ENCODE measurements at regions of chr9 and their contacts with region 1.

Region 1: DNA sequence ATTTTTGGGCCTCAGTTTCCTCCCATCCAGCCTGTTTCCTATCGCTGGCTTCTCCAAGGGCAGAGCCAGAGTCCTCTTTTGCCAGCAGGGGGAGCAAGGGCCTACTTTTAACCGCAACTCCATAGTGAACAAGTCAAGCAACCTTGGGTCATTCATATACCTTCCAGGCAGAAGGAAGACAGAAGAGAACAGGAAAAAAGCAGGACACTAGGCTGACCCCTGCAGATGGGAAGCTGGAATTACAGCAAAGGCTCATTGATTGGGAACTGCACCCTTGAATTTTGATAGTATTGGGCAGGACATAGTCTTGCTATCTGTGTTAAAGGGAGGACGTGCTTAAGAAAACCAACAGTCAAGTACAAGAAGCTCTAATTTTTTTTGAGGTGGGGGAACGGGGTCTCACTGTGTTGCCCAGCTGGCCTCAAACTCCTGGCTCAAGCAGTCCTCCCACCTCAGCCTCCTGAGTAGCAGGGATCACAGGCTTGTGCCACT is 30.1 kb downstream of the QRFP start:
- DNase-seq: peak; percentile 22 to 71 (median 42)
- ATAC-seq: peak; percentile 52
- H3K4me3 ChIP-seq: no peak overlapping the region
- H3K4me3 Mint-ChIP-seq: no peak overlapping the region
- H3K27ac ChIP-seq: no peak overlapping the region
- H3K27ac Mint-ChIP-seq: no peak overlapping the region
- H3K4me1 ChIP-seq: no peaks in the 10 kb centered on the region
- H3K4me1 Mint-ChIP-seq: peaks cover 5% of the 10 kb centered on the region
- H3K27me3 ChIP-seq: no peaks in the 10 kb centered on the region
- H3K27me3 Mint-ChIP-seq: no peaks in the 10 kb centered on the region
- CTCF ChIP-seq: peak; percentile 79

Region 2: DNA sequence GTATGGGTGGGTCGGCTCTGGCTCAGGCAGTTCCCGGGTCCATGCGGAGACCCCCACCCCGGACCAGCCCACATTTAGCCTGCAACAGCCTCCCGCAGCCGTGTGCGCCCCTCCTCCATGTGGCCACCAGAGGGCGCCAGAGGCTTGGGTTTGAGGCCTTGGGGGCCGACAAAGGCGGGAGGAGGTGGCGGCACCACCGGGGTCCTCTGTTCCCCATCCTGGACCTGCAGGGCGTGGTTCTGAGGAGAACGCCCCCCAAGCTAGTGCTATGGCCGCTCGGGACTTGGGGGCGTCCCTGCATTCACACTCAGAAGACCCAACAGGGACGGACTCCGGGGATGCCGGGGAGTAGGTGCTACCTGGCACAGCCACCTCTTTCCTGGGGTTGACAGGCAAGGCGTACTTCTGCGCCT is 405.3 kb before region 1 on chr9:
- CTCF ChIA-PET with region 1: no interaction called
- POLR2A ChIA-PET with region 1: no interaction called
- intact Hi-C with region 1: loop called in 1 of 2 experiments (anchors 2 kb)
- DNase-seq: peak; percentile 52 to 82 (median 66)
- ATAC-seq: peak; percentile 55
- H3K4me3 ChIP-seq: no peak overlapping the region
- H3K4me3 Mint-ChIP-seq: no peak overlapping the region
- H3K27ac ChIP-seq: no peak overlapping the region
- H3K27ac Mint-ChIP-seq: no peak overlapping the region
- H3K4me1 ChIP-seq: peaks cover 4% of the 10 kb centered on the region
- H3K4me1 Mint-ChIP-seq: no peaks in the 10 kb centered on the region
- H3K27me3 ChIP-seq: peaks cover 22 to 25% of the 10 kb centered on the region in 2 experiments
- H3K27me3 Mint-ChIP-seq: peaks cover 33% of the 10 kb centered on the region
- CTCF ChIP-seq: peak; percentile 90

Region 3: GRCh38 chr9:130522233-130522808 is 344.2 kb before region 1 on chr9:
- CTCF ChIA-PET with region 1: no interaction called
- POLR2A ChIA-PET with region 1: no interaction called
- intact Hi-C with region 1: no loop called
- DNase-seq: no peak
- ATAC-seq: no peak
- H3K4me3 ChIP-seq: no peak overlapping the region
- H3K4me3 Mint-ChIP-seq: no peak overlapping the region
- H3K27ac ChIP-seq: no peak overlapping the region
- H3K27ac Mint-ChIP-seq: no peak overlapping the region
- H3K4me1 ChIP-seq: no peaks in the 10 kb centered on the region
- H3K4me1 Mint-ChIP-seq: no peaks in the 10 kb centered on the region
- H3K27me3 ChIP-seq: peaks cover 0 to 2% of the 10 kb centered on the region in 2 experiments
- H3K27me3 Mint-ChIP-seq: peaks cover 22% of the 10 kb centered on the region
- CTCF ChIP-seq: no peak

Region 4: GRCh38 chr9:130707225-130707976 is 159.1 kb before region 1 on chr9:
- CTCF ChIA-PET with region 1: interaction called, 4 read pairs
- POLR2A ChIA-PET with region 1: no interaction called
- intact Hi-C with region 1: loop called (anchors 1 to 2 kb)
- DNase-seq: peak; percentile 49 to 88 (median 68)
- ATAC-seq: peak; percentile 63
- H3K4me3 ChIP-seq: no peak overlapping the region
- H3K4me3 Mint-ChIP-seq: no peak overlapping the region
- H3K27ac ChIP-seq: no peak overlapping the region
- H3K27ac Mint-ChIP-seq: peak overlapping the region; percentile 2
- H3K4me1 ChIP-seq: peaks cover 5% of the 10 kb centered on the region
- H3K4me1 Mint-ChIP-seq: peaks cover 12% of the 10 kb centered on the region
- H3K27me3 ChIP-seq: no peaks in the 10 kb centered on the region
- H3K27me3 Mint-ChIP-seq: no peaks in the 10 kb centered on the region
- CTCF ChIP-seq: peak; percentile 87

Region 5: GRCh38 chr9:130770679-130771442 is 95.7 kb before region 1 on chr9:
- CTCF ChIA-PET with region 1: interaction called, 3 read pairs
- POLR2A ChIA-PET with region 1: no interaction called
- intact Hi-C with region 1: loop called in 1 of 2 experiments (anchors 2 kb)
- DNase-seq: peak in 3 of 14 experiments; percentile 27 to 54 (median 50)
- ATAC-seq: peak; percentile 64
- H3K4me3 ChIP-seq: no peak overlapping the region
- H3K4me3 Mint-ChIP-seq: no peak overlapping the region
- H3K27ac ChIP-seq: no peak overlapping the region
- H3K27ac Mint-ChIP-seq: no peak overlapping the region
- H3K4me1 ChIP-seq: peaks cover 8% of the 10 kb centered on the region
- H3K4me1 Mint-ChIP-seq: peaks cover 43% of the 10 kb centered on the region
- H3K27me3 ChIP-seq: no peaks in the 10 kb centered on the region
- H3K27me3 Mint-ChIP-seq: no peaks in the 10 kb centered on the region
- CTCF ChIP-seq: peak; percentile 62

Region 6: GRCh38 chr9:130830231-130830760 is 36.2 kb before region 1 on chr9:
- CTCF ChIA-PET with region 1: no interaction called
- POLR2A ChIA-PET with region 1: no interaction called
- intact Hi-C with region 1: no loop called
- DNase-seq: no peak
- ATAC-seq: no peak
- H3K4me3 ChIP-seq: no peak overlapping the region
- H3K4me3 Mint-ChIP-seq: no peak overlapping the region
- H3K27ac ChIP-seq: no peak overlapping the region
- H3K27ac Mint-ChIP-seq: no peak overlapping the region
- H3K4me1 ChIP-seq: peaks cover 17% of the 10 kb centered on the region
- H3K4me1 Mint-ChIP-seq: peaks cover 23% of the 10 kb centered on the region
- H3K27me3 ChIP-seq: no peaks in the 10 kb centered on the region
- H3K27me3 Mint-ChIP-seq: no peaks in the 10 kb centered on the region
- CTCF ChIP-seq: no peak

Region 7: DNA sequence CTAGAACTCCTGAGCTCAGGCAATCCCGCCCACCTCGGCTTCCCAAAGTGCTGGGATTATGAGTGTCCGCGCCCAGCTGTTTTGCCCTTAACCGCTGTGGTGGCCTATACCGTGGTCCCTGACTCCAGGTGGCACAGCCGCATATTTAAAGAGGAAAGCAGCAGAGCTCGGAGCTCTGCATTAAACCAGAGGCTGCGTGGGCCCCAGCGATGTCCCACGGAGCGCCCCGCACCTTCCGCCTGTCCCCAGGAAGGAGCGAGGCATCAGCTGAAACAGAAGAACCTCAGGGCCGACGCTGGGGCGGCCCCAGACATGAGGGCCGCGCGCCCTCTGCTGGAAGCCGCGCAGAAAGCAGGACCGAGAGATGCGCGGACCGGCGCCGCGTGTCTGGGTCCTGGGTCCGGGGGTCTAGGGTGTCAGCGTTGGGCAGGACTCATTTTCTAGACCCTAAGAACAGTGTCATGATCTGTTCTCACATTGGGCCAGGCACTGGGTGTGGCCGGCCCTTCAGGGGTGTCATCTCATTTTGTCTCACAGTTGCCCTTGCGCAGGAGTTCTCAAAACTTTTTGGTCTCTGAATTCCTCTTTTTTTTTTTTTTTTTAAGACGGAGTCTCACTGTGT is 180.2 kb after region 1 on chr9:
- CTCF ChIA-PET with region 1: interaction called, 13 read pairs
- POLR2A ChIA-PET with region 1: no interaction called
- intact Hi-C with region 1: loop called (anchors 1 kb)
- DNase-seq: peak; percentile 47 to 84 (median 65)
- ATAC-seq: peak; percentile 89
- H3K4me3 ChIP-seq: no peak overlapping the region
- H3K4me3 Mint-ChIP-seq: no peak overlapping the region
- H3K27ac ChIP-seq: no peak overlapping the region
- H3K27ac Mint-ChIP-seq: no peak overlapping the region
- H3K4me1 ChIP-seq: peaks cover 17% of the 10 kb centered on the region
- H3K4me1 Mint-ChIP-seq: peaks cover 20% of the 10 kb centered on the region
- H3K27me3 ChIP-seq: no peaks in the 10 kb centered on the region
- H3K27me3 Mint-ChIP-seq: no peaks in the 10 kb centered on the region
- CTCF ChIP-seq: peak; percentile 90

Measured in CD4-positive, alpha-beta T cell (primary cell).